PC-3 (cell line): ENCODE measurements at regions of chr10 and their contacts with region 1.

Region 1: DNA sequence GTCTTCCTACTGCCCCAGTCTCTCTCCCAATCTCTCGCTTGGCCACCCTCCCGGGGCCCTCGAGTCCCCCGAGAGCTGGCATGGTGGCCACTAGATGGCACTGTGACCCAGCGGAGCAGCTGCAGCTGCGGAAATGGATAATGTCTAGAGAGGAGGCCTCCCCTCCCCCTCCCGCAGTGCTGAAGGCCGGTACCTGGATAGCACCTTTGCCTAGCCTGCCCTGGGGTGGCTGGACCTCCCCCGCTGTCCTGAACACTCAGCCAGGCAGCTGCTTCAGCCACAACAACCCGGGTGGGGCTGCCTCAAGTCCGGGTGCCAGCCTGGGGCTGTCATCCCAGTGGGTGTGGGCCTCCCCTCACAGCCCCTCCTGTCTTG is 65.2 kb downstream of the GOLGA7B start:
- DNase-seq: peak; percentile 70
- ATAC-seq: peak; percentile 92
- H3K4me3 ChIP-seq: 0 out of 2 replicates have a peak overlapping the region, but pooled peaks have one; percentile 15
- H3K27ac ChIP-seq: no peak overlapping the region
- H3K4me1 ChIP-seq: no peaks in the 10 kb centered on the region
- H3K27me3 ChIP-seq: no peaks in the 10 kb centered on the region
- CTCF ChIP-seq: peak; percentile 86

Region 2: DNA sequence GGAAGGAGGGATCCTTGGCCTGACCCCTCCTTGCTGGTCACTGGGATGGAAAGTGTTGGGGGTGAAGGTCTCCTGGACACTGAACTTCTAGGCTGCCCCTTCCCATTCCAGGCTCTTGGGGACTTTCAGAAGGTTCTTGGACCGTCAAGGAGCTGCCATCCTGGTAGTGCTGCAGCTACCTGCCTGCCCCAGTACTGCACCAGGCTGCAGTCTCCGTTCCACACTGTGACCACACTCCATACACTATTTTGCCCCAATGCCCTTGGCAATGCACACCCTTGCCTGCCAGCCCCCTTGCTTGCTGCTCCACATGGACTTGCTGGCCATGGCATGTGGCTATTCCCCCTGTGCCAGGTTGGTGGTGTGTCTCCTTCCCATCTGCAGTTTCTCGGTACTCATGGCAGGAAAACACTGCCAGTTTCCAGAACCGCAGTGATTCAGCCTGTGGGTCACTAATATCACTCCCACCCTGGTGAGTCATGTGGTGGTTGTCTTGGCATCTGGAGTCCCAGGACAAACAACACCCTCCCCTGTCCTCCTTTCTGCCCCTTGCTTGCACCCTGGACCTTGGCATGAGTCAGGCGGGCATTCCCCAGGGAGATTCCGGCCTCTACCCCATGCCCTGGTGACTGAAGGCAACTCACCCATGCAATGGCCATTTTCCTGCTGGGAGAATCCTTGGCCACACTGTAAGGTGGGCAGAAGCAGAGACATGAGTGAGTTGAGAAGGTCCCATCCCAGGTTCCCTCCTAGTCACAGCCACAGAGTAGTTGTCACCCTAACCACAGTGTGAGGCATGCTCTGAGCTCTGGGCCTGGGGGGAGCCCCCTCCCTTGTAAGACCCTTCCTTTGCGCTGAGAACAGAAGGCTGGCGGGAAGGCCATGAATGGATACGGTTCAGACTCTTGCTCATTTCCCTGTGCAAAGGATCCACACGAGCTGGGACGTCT is 32.4 kb before region 1 on chr10:
- CTCF ChIA-PET with region 1: no interaction called
- POLR2A ChIA-PET with region 1: no interaction called
- intact Hi-C with region 1: no loop called
- DNase-seq: peak; percentile 94
- ATAC-seq: peak; percentile 91
- H3K4me3 ChIP-seq: no peak overlapping the region
- H3K27ac ChIP-seq: peak overlapping the region; percentile 94
- H3K4me1 ChIP-seq: peaks cover 28% of the 10 kb centered on the region
- H3K27me3 ChIP-seq: no peaks in the 10 kb centered on the region
- CTCF ChIP-seq: no peak

Region 3: DNA sequence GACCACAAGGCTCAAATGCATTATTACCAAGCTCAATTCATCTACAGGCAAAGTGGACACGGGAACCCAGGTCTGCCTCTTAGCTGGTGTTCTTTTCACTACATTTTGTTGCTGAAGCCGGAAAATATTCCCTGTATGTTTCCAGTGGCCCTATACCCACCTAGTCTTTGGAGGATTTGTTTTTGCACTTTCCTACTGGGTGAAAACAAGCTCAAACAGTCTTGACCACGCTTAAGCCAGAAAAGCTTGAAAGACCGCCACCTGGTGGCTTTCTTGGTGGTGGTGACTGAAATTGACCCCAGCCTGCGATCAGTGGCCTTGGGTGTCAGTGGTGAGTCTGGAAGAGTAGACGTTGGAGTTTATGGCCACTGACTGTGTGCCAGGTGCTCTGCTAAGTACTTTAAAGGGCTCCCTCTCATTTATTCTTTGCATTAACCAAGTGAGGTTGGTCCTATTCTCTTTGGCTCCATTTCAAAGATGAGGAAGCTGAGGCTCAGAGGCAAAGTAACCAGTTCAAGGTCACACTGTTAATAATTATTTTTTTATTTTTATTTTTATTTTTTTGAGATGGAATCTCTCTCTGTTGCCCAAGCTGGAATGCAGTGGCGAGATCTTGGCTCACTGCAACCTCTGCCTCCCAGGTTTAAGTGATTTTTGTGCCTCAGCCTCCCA is 126.7 kb after region 1 on chr10:
- CTCF ChIA-PET with region 1: interaction called, 14 read pairs
- POLR2A ChIA-PET with region 1: no interaction called
- intact Hi-C with region 1: loop called (anchors 1 kb)
- DNase-seq: peak; percentile 68
- ATAC-seq: peak; percentile 80
- H3K4me3 ChIP-seq: no peak overlapping the region
- H3K27ac ChIP-seq: no peak overlapping the region
- H3K4me1 ChIP-seq: no peaks in the 10 kb centered on the region
- H3K27me3 ChIP-seq: peaks cover 37% of the 10 kb centered on the region
- CTCF ChIP-seq: peak; percentile 77

Region 4: DNA sequence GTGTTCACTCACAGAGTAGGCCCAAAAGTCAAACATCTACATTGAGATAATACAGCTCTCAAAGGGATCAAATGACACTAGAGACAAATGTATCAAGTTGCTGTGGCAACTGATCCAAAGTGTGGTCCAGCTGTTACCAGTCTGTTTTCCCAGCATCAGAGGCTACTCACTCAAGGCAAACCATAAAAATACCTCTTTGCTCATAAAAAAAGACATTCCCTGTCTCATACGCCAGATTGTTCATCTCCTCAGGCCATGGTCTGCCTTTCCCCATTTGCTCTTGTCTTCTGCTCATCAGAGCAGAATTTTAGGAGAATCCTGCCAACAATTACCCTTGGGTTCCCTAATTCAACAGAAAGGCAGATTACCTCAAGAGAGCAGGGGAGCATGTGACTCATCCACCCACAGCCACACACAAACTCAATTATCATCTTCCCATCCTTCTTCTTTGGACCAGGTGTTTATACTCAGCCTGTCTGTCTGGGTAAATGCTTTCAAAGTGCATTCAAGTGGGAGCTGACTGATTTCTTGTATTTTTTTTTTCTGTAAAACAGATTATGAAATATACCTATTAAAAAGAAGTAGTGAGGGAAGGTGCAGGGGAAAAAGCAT is 758.5 kb after region 1 on chr10:
- CTCF ChIA-PET with region 1: no interaction called
- POLR2A ChIA-PET with region 1: no interaction called
- intact Hi-C with region 1: no loop called
- DNase-seq: no peak
- ATAC-seq: no peak
- H3K4me3 ChIP-seq: no peak overlapping the region
- H3K27ac ChIP-seq: no peak overlapping the region
- H3K4me1 ChIP-seq: no peaks in the 10 kb centered on the region
- H3K27me3 ChIP-seq: no peaks in the 10 kb centered on the region
- CTCF ChIP-seq: no peak